ENCODE measurements at regions of chr2 and their contacts with region 1.

Region 1: GRCh38 chr2:112542123-112542983 is at the start of gene POLR1B:
- DNase-seq: peak; percentile 77
- H3K4me3 Mint-ChIP-seq: no peak within 1 kb of the TSS
- H3K27ac Mint-ChIP-seq: no peak within 1 kb of the TSS
- H3K4me1 Mint-ChIP-seq: peaks cover 11% of the 10 kb centered on the region
- H3K27me3 Mint-ChIP-seq: no peaks in the 10 kb centered on the region
- total RNA-seq, gene POLR1B: 75.6 and 78.4 TPM in 2 replicates

Region 2: DNA sequence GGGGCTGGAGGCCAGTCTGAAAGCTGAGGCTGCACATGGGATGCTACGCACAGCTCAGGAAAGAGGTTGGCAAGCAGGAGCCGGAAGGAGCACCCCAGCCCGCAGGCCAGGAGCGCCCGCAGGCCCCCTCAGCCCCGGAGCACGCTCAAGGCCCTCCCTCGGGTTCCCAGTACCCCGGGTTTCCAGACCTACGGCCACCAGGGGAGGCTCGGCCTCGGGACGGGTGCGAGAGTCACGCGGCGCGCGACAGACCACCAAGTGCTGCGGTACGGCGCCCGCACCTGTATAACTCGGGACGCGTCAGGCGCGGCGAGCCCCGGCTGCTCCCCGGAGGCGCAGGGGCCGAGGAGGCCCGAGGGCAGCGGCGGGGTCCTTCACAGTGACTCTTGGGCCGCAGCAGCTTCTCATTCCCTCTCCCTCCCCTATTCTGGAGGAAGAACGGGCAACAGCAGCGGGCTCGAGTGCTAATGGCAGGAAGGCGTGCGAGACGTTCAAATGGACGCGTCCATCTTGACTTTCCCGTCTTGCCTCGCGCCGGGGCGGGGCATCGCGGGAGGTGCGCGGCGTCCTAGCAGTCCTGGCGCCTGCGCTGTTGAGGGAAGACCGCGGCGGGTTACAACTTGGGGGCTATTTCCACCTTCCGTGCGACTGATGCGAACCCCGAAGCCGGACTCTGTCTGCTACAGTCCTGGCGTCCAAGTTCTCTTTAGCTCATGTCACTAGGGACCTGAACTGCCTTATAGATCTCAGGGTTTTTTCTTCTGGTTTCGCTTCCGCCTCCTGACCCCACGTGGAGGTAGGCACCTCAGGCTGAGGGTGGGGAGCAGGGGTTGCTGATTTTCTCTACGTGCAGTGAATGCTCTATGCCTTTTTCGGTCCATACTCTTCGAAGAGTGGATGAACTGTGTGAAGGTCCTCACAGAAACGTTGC is 658.4 kb before region 1 on chr2 and contains the start of gene ANAPC1:
- intact Hi-C with region 1: loop called (anchors 1 kb)
- DNase-seq: peak; percentile 84
- H3K4me3 Mint-ChIP-seq: peak within 1 kb of the TSS; percentile 95
- H3K27ac Mint-ChIP-seq: peak within 1 kb of the TSS; percentile 93
- H3K4me1 Mint-ChIP-seq: no peaks in the 10 kb centered on the region
- H3K27me3 Mint-ChIP-seq: peaks cover 4% of the 10 kb centered on the region
- total RNA-seq, gene ANAPC1: 120 and 126 TPM in 2 replicates

Region 3: DNA sequence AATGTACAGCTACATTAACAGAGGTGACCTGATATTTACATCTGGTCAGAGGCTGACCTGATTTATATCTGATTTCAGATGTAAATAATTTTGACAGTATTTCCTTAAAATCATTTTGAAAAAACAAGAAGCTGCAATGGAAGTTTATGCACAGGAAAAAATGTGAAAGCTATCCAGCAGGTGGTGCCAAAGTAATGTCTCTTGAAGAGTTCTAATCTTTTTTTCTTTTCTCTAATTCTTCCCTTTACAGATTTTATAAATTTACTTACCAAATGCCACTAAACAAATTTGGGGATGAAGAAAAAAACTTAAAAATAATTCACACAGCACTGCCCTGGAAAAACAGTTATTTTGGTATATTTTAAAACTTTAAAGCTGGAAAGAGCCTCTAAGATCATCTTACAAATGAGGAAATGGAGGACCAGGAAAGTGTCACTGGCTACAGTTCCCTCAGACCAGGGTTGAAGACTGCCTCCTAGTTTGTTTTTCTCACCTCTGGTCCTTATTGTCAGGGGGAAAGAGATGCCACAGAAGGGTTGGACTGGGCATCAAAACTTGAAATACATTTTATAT is 420.6 kb before region 1 on chr2:
- intact Hi-C with region 1: loop called (anchors 5 kb)
- DNase-seq: peak; percentile 30
- H3K4me3 Mint-ChIP-seq: no peak overlapping the region
- H3K27ac Mint-ChIP-seq: no peak overlapping the region
- H3K4me1 Mint-ChIP-seq: no peaks in the 10 kb centered on the region
- H3K27me3 Mint-ChIP-seq: no peaks in the 10 kb centered on the region

Region 4: GRCh38 chr2:112254466-112255239 is 287.7 kb before region 1 on chr2 and contains the start of gene ZC3H8:
- intact Hi-C with region 1: loop called (anchors 1 kb)
- DNase-seq: peak; percentile 96
- H3K4me3 Mint-ChIP-seq: peak within 1 kb of the TSS; percentile 50
- H3K27ac Mint-ChIP-seq: peak within 1 kb of the TSS; percentile 91
- H3K4me1 Mint-ChIP-seq: peaks cover 27% of the 10 kb centered on the region
- H3K27me3 Mint-ChIP-seq: no peaks in the 10 kb centered on the region
- total RNA-seq, gene ZC3H8: 32.9 and 37.4 TPM in 2 replicates

Region 5: DNA sequence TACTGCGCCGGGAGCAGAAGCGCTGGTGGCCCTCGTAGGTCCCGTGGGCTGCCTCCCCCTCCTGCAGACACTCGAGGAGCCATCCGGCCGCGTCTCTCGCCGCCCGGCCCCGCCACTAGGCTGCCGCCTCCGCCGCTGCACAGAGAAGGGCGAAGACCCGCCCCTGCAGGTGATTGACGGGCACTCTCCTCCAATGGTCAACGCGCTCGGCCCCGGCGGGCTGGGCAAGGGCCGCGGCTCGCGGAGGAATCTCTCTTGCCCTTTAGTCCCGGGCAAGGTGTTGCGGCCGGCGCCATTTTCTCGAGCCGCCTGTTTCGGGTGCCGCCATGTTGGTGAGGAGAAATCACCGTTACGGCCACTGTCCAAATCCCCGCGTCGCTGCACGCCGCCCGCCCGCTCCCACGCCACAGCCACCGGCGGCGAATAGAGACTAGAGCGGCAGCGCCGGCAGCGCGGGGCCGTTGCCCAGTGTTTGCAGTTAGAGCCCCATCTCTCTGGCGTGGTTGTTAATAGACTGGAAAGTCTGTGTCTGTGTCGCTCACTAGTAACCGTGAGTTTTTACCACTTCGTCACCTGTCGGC is 267.0 kb before region 1 on chr2 and contains the start of gene ZC3H6:
- intact Hi-C with region 1: loop called (anchors 1 kb)
- DNase-seq: peak; percentile 99
- H3K4me3 Mint-ChIP-seq: peak within 1 kb of the TSS; percentile 91
- H3K27ac Mint-ChIP-seq: peak within 1 kb of the TSS; percentile 97
- H3K4me1 Mint-ChIP-seq: peaks cover 13% of the 10 kb centered on the region
- H3K27me3 Mint-ChIP-seq: peaks cover 2% of the 10 kb centered on the region
- total RNA-seq, gene ZC3H6: 3.3 and 4.3 TPM in 2 replicates

Region 6: GRCh38 chr2:112481050-112481527 is 61.3 kb before region 1 on chr2:
- intact Hi-C with region 1: loop called (anchors 1 kb)
- DNase-seq: peak; percentile 79
- H3K4me3 Mint-ChIP-seq: peak overlapping the region; percentile 87
- H3K27ac Mint-ChIP-seq: peak overlapping the region; percentile 96
- H3K4me1 Mint-ChIP-seq: peaks cover 40% of the 10 kb centered on the region
- H3K27me3 Mint-ChIP-seq: peaks cover 4% of the 10 kb centered on the region

Region 7: DNA sequence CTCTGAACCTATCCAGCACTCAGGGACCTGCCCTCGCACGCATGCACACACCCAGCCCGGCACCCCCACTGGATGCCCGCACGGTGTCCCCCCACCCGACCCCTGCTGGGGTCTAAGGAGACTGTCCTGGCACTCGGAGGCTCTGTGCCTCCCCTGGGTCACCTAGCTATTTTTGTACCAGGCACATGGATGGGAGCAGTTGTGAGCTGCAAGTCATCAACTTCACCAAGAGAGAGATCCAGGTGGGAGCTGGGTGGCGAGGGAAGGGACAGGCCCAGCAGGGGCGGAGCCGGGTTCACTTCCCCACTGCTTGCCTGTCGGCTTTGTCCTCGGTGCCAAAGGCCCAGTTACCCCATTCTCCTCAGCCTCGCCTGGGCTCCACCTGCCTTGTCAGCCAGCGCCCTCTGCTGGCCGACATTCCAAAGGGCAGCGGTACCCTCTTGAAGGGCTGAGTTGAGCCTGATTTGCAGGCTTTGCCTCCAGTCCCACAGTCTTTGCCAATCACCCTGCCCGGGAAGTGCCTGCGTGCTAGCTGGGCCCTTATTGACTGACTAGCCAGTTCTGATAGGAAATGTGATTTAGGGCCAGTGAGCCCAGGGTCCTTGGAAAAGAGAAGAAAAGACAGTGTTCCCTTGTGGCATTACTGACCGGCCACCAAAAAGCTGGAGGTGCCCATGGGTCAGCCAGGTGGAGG is 184.3 kb after region 1 on chr2:
- intact Hi-C with region 1: loop called (anchors 5 kb)
- DNase-seq: peak; percentile 86
- H3K4me3 Mint-ChIP-seq: no peak overlapping the region
- H3K27ac Mint-ChIP-seq: no peak overlapping the region
- H3K4me1 Mint-ChIP-seq: peaks cover 16% of the 10 kb centered on the region
- H3K27me3 Mint-ChIP-seq: no peaks in the 10 kb centered on the region

Measured in activated T-helper 1 cell treated with anti-CD3 and anti-CD28 coated beads, Interleukin-12 subunit alpha, Interleukin-12 subunit beta, Interleukin-2, Interleukin-4 antibody, amounts not matched to agents 30 ng/mL and 10 ng/mL and 1 ng/mL, durations not matched to agents 14 hours and 24 hours and 36 hours (primary cell).